Endothelial cell of umbilical vein (primary cell): ENCODE measurements at regions of chr6 and their contacts with region 1.

Region 1: GRCh38 chr6:151323791-151324487 is 67.4 kb downstream of the ZBTB2 start:
- DNase-seq: peak; percentile 94
- H3K4me3 ChIP-seq: no peak overlapping the region
- H3K27ac ChIP-seq: peak overlapping the region; percentile 80
- H3K4me1 ChIP-seq: peaks cover 26% of the 10 kb centered on the region
- H3K27me3 ChIP-seq: no peaks in the 10 kb centered on the region
- CTCF ChIP-seq: peak; percentile 94 to 97
- POLR2A ChIP-seq: peak; percentile 28

Region 2: DNA sequence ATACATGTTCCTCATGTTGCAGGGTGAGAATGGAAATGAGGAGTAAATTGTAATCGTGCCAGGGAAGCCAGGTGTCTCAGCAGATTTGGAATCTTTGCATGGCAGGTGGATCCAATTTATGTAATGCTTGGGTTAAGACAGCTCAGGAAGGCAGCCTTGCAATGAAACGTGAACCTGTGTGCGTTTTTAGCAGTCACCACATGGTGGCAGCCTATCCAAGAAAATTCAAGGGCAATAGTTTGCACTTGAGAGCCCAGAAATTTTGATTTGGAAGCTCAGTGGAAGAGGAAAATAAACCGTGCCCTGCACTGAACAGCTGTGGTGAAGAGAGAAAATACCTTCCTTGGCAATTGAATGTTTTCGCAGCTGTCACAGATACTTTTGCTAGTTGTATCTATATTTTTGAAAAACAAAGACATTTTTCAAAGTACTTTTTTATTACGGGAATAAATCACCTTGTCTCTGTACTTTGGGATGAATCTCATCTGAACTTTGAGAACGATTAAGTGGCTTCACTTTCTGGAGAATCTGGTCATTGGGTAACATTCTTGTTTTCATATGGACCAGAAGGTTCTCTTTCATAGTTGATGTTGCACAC is 432.0 kb before region 1 on chr6:
- CTCF ChIA-PET with region 1: interaction called, 257 read pairs
- POLR2A ChIA-PET with region 1: interaction called, 3 read pairs
- dilution Hi-C with region 1: no loop called
- intact Hi-C with region 1: loop called (anchors 1 kb)
- DNase-seq: peak; percentile 90
- H3K4me3 ChIP-seq: no peak overlapping the region
- H3K27ac ChIP-seq: peak overlapping the region; percentile 8
- H3K4me1 ChIP-seq: peaks cover 2% of the 10 kb centered on the region
- H3K27me3 ChIP-seq: no peaks in the 10 kb centered on the region
- CTCF ChIP-seq: peak; percentile 78 to 82
- POLR2A ChIP-seq: no peak

Region 3: GRCh38 chr6:151004415-151005024 is 319.4 kb before region 1 on chr6:
- CTCF ChIA-PET with region 1: interaction called, 51 read pairs
- POLR2A ChIA-PET with region 1: interaction called, 12 read pairs
- dilution Hi-C with region 1: no loop called
- intact Hi-C with region 1: loop called (anchors 2 kb)
- DNase-seq: peak; percentile 100
- H3K4me3 ChIP-seq: no peak overlapping the region
- H3K27ac ChIP-seq: peak overlapping the region; percentile 94
- H3K4me1 ChIP-seq: peaks cover 41% of the 10 kb centered on the region
- H3K27me3 ChIP-seq: no peaks in the 10 kb centered on the region
- CTCF ChIP-seq: no peak
- POLR2A ChIP-seq: peak; percentile 71

Region 4: GRCh38 chr6:151036869-151037680 is 286.9 kb before region 1 on chr6:
- CTCF ChIA-PET with region 1: interaction called, 11 read pairs
- POLR2A ChIA-PET with region 1: interaction called, 10 read pairs
- dilution Hi-C with region 1: no loop called
- intact Hi-C with region 1: loop called (anchors 2 kb)
- DNase-seq: peak; percentile 82
- H3K4me3 ChIP-seq: no peak overlapping the region
- H3K27ac ChIP-seq: peak overlapping the region; percentile 100
- H3K4me1 ChIP-seq: peaks cover 52% of the 10 kb centered on the region
- H3K27me3 ChIP-seq: no peaks in the 10 kb centered on the region
- CTCF ChIP-seq: no peak
- POLR2A ChIP-seq: peak; percentile 44

Region 5: DNA sequence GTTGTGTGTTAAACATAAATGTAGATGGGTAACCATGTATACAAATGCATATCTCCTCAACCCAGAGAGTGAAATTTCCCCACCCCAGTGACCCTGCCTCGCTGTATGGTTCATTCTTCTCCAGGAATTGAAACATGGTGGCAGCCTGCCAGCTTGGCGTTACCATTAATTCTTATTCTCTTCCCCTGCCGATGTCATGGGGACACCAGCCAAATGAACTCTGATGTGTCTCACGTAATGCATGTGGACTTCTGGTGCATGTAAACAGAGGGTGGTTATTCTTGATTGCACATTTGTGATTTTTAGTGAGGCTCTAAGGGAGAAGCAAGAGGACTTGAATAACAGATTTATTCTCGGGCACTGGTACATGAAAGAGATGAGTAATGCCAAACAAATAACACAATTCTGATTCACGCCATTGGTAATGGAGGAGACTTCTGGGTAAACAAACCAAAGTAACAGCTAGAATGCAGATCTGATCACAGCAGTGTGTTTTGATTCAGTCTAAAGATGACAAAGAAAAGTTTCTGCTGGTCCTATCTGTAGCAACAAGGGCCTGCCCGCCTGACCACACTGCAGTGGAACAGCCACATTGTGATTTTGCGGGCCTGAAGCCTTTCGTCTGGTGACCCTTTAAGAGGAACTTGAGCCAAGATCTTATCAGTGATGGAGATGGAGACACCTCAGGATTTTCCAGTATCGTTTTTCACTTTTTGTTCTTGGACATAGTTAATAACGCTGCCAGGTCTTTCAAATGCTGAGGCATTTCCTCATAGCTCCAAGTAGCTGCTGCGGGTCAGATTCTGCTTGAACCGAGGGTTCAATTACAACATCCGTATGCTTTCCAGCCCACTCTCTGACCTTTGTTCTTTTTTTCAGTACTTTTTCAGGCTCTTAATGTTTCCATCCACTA is 256.0 kb before region 1 on chr6:
- CTCF ChIA-PET with region 1: interaction called, 34 read pairs
- POLR2A ChIA-PET with region 1: no interaction called
- dilution Hi-C with region 1: no loop called
- intact Hi-C with region 1: loop called (anchors 1 kb)
- DNase-seq: peak; percentile 99
- H3K4me3 ChIP-seq: no peak overlapping the region
- H3K27ac ChIP-seq: peak overlapping the region; percentile 90
- H3K4me1 ChIP-seq: peaks cover 61% of the 10 kb centered on the region
- H3K27me3 ChIP-seq: no peaks in the 10 kb centered on the region
- CTCF ChIP-seq: no peak
- POLR2A ChIP-seq: peak; percentile 47

Region 6: GRCh38 chr6:151240036-151240685 is 83.8 kb before region 1 on chr6:
- CTCF ChIA-PET with region 1: interaction called, 50 read pairs
- POLR2A ChIA-PET with region 1: interaction called, 3 read pairs
- dilution Hi-C with region 1: no loop called
- intact Hi-C with region 1: loop called (anchors 1 kb)
- DNase-seq: peak; percentile 73
- H3K4me3 ChIP-seq: peak overlapping the region; percentile 64 to 96 (median 69)
- H3K27ac ChIP-seq: peak overlapping the region; percentile 59
- H3K4me1 ChIP-seq: peaks cover 30% of the 10 kb centered on the region
- H3K27me3 ChIP-seq: no peaks in the 10 kb centered on the region
- CTCF ChIP-seq: peak in 1 of 2 donors; percentile 17
- POLR2A ChIP-seq: peak; percentile 79

Region 7: GRCh38 chr6:151338816-151339215 is 14.9 kb after region 1 on chr6:
- CTCF ChIA-PET with region 1: interaction called, 73 read pairs
- POLR2A ChIA-PET with region 1: no interaction called
- dilution Hi-C with region 1: no loop called
- intact Hi-C with region 1: no loop called
- DNase-seq: no peak
- H3K4me3 ChIP-seq: no peak overlapping the region
- H3K27ac ChIP-seq: no peak overlapping the region
- H3K4me1 ChIP-seq: no peaks in the 10 kb centered on the region
- H3K27me3 ChIP-seq: no peaks in the 10 kb centered on the region
- CTCF ChIP-seq: no peak
- POLR2A ChIP-seq: no peak

Region 8: GRCh38 chr6:151359486-151359885 is 35.5 kb after region 1 on chr6:
- CTCF ChIA-PET with region 1: no interaction called
- POLR2A ChIA-PET with region 1: no interaction called
- dilution Hi-C with region 1: no loop called
- intact Hi-C with region 1: no loop called
- DNase-seq: no peak
- H3K4me3 ChIP-seq: no peak overlapping the region
- H3K27ac ChIP-seq: no peak overlapping the region
- H3K4me1 ChIP-seq: peaks cover 15% of the 10 kb centered on the region
- H3K27me3 ChIP-seq: no peaks in the 10 kb centered on the region
- CTCF ChIP-seq: no peak
- POLR2A ChIP-seq: no peak